Right ventricle myocardium inferior (tissue), 1 donor: ENCODE measurements at regions of chr12 and their contacts with region 1.

Region 1: DNA sequence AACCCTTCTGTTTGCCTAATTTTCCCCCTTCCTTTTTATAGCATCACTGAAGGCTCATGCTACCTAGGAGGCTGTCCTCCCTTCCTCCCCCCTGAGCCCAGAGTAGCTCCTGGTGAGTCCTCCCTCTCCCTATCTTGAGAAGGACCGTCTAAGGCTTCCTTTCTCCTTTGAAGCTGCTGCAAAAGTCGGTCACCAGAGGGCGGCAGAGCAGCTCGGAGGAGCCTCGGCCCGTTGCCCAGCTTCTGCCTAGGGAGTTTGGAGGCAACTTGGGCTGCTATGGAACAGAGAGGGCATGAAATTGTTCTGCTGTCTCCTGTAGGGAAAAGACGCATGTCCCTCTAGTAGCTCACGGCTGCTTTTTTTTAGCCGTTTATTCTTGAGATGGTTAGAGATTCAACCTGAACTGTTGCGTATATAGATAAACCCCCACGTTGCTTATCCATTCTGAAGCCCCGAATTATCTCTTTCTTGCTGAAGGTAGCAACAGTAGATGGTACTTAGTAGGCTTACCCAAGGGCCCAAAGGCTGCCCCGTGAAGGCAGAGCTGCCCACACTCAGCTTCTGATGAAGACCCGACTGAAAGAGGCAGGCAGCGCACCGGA is 5.7 kb downstream of the WNT5B start:
- DNase-seq: peak; percentile 93
- ATAC-seq: peak; percentile 56

Region 2: GRCh38 chr12:1583421-1584078 is 51.1 kb before region 1 on chr12:
- intact Hi-C with region 1: no loop called
- DNase-seq: no peak
- ATAC-seq: peak; percentile 85

Region 3: DNA sequence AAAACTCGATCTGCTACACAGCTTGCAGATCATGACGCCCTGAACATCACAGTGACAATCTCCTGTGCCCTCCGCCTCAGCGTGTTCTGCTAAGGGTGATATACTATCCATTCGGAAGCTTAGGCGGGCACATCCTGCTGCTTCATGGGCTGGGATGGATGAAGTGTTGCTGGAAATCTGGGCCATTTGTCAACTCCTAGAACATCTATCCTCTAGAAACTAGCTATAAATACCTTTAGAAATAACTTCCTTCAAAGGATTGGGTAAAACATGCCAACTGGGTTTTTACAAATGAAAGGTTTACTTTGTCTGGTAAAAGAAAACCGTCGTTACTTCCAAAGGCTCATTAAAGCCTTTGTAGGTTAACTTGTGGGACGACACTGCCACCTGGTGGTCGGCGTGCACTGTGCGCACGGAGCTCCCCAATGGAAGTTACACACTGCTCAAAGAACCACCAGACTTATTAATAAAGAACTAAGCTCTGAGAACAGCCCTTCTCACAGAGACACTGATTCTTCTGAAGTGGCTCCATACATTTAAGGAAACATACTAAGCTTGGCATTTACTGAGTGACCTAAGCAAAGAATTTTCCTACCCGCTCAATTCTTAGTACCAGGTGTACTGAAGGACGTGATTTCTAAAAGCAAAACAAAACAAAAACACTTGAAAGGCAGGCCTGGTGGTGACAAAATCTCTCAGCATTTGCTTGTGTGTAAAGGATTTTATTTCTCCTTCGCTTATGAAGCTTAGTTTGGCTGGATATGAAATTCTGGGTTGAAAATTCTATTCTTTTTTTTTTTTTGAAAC is 305.3 kb after region 1 on chr12:
- intact Hi-C with region 1: loop called (anchors 5 kb)
- DNase-seq: peak; percentile 93
- ATAC-seq: peak; percentile 86